ENCODE measurements at regions of chr1 and their contacts with region 1.

Region 1: DNA sequence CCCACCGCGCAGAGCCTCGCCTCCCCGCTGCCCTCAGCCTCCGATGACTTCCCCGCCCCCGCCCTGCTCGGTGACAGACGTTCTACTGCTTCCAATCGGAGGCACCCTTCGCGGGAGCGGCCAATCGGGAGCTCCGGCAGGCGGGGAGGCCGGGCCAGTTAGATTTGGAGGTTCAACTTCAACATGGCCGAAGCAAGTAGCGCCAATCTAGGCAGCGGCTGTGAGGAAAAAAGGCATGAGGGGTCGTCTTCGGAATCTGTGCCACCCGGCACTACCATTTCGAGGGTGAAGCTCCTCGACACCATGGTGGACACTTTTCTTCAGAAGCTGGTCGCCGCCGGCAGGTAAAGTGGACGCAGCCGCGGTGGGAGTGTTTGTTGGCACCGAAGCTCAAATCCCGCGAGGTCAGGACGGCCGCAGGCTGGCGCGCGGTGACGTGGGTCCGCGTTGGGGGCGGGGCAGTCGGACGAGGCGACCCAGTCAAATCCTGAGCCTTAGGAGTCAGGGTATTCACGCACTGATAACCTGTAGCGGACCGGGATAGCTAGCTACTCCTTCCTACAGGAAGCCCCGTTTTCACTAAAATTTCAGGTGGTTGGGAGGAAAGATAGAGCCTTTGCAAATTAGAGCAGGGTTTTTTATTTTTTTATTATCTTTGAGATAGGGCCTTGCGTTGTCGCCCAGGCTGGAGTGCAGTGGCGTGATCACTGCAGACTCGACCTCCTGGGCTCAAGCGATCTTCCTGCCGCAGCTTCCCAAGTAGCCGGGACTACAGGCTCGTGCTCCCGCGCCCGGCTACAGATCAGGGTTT is at the start of gene PMF1:
- DNase-seq: peak; percentile 94 to 98 (median 95)
- H3K4me3 ChIP-seq: peak within 1 kb of the TSS; percentile 83 to 93
- H3K4me3 Mint-ChIP-seq: peak within 1 kb of the TSS; percentile 93 to 99 (median 96)
- H3K27ac ChIP-seq: peak within 1 kb of the TSS; percentile 98
- H3K27ac Mint-ChIP-seq: peak within 1 kb of the TSS; percentile 97 to 100 (median 99)
- H3K4me1 ChIP-seq: peaks cover 29% of the 10 kb centered on the region
- H3K4me1 Mint-ChIP-seq: peaks cover 15 to 43% (median 31%) of the 10 kb centered on the region in 4 donors
- H3K27me3 ChIP-seq: no peaks in the 10 kb centered on the region
- H3K27me3 Mint-ChIP-seq: no peaks in the 10 kb centered on the region
- total RNA-seq, gene PMF1: 39.0 to 40.2 TPM

Region 2: DNA sequence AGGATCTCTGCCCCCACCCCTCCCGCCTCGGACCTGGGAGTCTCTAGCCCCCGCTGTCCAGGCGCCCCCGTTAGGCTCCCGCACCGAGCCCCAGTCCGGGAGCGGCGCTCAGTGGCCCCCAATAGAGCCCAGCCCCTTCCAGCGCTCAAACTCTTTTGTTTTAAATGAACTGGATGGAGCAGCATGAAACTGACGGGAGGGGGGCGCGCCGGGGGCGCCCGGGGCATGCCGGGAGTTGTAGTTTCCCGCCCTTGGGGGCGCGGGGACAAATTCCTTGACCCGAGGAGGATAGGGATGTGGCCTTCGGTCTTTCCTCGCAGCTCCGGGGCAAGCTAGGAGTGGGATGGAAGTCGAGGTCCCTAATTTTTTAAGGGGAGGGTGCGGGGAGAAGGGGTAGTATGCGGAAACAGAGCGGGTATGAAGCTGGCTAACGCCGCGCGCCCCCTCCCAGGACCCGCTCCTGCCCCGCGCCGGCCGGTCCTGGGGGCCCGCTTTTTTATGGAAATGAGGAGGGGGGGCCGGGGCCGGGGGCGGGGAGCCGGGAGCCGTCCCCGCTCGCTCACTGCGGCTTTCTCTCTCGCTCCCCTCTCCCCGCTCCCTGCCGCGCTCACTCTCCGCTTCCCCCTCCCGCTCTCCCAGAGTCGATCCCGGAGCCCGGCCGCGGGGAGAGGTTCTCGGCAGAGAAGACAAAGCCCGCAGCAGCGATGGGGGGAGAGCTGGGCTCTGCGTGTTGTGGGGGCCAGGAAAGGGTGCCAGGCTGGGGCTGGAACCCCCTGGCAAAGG is 130.5 kb before region 1 on chr1 and contains the start of gene MEX3A:
- CTCF ChIA-PET with region 1: no interaction called
- POLR2A ChIA-PET with region 1: interaction called, 3 read pairs
- intact Hi-C with region 1: loop called (anchors 2 kb)
- DNase-seq: peak; percentile 51 to 61 (median 58)
- H3K4me3 ChIP-seq: peak within 1 kb of the TSS; percentile 68 to 81
- H3K4me3 Mint-ChIP-seq: peak within 1 kb of the TSS; percentile 83 to 88 (median 86)
- H3K27ac ChIP-seq: peak within 1 kb of the TSS; percentile 43
- H3K27ac Mint-ChIP-seq: peak within 1 kb of the TSS in 3 of 7 donors; percentile 72 to 86 (median 84)
- H3K4me1 ChIP-seq: peaks cover 19% of the 10 kb centered on the region
- H3K4me1 Mint-ChIP-seq: peaks cover 5 to 15% (median 9%) of the 10 kb centered on the region in 4 donors
- H3K27me3 ChIP-seq: peaks cover 10% of the 10 kb centered on the region
- H3K27me3 Mint-ChIP-seq: peaks cover 10 to 20% of the 10 kb centered on the region in 2 donors
- total RNA-seq, gene MEX3A: not detected

Region 3: DNA sequence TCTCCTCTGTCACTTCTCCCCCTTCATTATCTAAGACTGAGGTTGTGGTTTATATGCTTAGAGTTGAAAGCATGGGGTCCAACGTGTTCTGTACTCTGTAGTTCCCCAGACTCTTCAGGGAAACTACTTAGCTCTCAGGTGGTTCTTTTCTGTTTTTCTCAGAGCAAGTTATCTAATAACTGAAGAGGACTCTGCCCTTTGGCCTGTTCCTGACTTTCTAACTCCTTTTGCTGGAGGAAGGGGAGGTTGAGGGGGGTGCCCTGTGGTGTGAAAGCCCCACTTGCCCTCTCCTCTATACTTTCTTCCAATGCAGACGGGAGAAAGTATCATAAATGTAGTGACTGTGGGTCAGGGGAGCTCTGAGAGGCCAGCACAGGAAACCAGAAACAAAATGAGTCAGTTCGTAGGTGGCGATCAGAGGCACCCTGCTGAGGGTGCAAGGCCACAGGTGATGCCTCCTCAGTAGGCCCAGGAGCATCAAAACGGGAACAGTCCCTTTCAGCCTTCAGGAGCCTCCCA is 14.1 kb before region 1 on chr1:
- CTCF ChIA-PET with region 1: interaction called, 7 read pairs
- POLR2A ChIA-PET with region 1: interaction called, 54 read pairs
- intact Hi-C with region 1: no loop called
- DNase-seq: no peak
- H3K4me3 ChIP-seq: no peak overlapping the region
- H3K4me3 Mint-ChIP-seq: peak overlapping the region in 3 of 8 donors; percentile 22 to 28 (median 25)
- H3K27ac ChIP-seq: no peak overlapping the region
- H3K27ac Mint-ChIP-seq: peak overlapping the region; percentile 65 to 86 (median 79)
- H3K4me1 ChIP-seq: peaks cover 72% of the 10 kb centered on the region
- H3K4me1 Mint-ChIP-seq: peaks cover 37 to 66% (median 50%) of the 10 kb centered on the region in 4 donors
- H3K27me3 ChIP-seq: no peaks in the 10 kb centered on the region
- H3K27me3 Mint-ChIP-seq: no peaks in the 10 kb centered on the region

Region 4: GRCh38 chr1:156371553-156372264 is 158.7 kb after region 1 on chr1:
- CTCF ChIA-PET with region 1: no interaction called
- POLR2A ChIA-PET with region 1: no interaction called
- intact Hi-C with region 1: no loop called
- DNase-seq: no peak
- H3K4me3 ChIP-seq: no peak overlapping the region
- H3K4me3 Mint-ChIP-seq: no peak overlapping the region
- H3K27ac ChIP-seq: no peak overlapping the region
- H3K27ac Mint-ChIP-seq: no peak overlapping the region
- H3K4me1 ChIP-seq: peaks cover 8% of the 10 kb centered on the region
- H3K4me1 Mint-ChIP-seq: peaks cover 1 to 6% (median 4%) of the 10 kb centered on the region in 4 donors
- H3K27me3 ChIP-seq: peaks cover 18% of the 10 kb centered on the region
- H3K27me3 Mint-ChIP-seq: peaks cover 23 to 46% of the 10 kb centered on the region in 2 donors

Region 5: GRCh38 chr1:156508163-156508887 is 295.3 kb after region 1 on chr1:
- CTCF ChIA-PET with region 1: no interaction called
- POLR2A ChIA-PET with region 1: no interaction called
- intact Hi-C with region 1: no loop called
- DNase-seq: no peak
- H3K4me3 ChIP-seq: no peak overlapping the region
- H3K4me3 Mint-ChIP-seq: no peak overlapping the region
- H3K27ac ChIP-seq: no peak overlapping the region
- H3K27ac Mint-ChIP-seq: peak overlapping the region; percentile 57 to 89 (median 80)
- H3K4me1 ChIP-seq: peaks cover 42% of the 10 kb centered on the region
- H3K4me1 Mint-ChIP-seq: peaks cover 24 to 54% (median 30%) of the 10 kb centered on the region in 4 donors
- H3K27me3 ChIP-seq: no peaks in the 10 kb centered on the region
- H3K27me3 Mint-ChIP-seq: peaks cover 1 to 2% of the 10 kb centered on the region in 2 donors